ENCODE measurements at regions of chr14 and their contacts with region 1.

Region 1: DNA sequence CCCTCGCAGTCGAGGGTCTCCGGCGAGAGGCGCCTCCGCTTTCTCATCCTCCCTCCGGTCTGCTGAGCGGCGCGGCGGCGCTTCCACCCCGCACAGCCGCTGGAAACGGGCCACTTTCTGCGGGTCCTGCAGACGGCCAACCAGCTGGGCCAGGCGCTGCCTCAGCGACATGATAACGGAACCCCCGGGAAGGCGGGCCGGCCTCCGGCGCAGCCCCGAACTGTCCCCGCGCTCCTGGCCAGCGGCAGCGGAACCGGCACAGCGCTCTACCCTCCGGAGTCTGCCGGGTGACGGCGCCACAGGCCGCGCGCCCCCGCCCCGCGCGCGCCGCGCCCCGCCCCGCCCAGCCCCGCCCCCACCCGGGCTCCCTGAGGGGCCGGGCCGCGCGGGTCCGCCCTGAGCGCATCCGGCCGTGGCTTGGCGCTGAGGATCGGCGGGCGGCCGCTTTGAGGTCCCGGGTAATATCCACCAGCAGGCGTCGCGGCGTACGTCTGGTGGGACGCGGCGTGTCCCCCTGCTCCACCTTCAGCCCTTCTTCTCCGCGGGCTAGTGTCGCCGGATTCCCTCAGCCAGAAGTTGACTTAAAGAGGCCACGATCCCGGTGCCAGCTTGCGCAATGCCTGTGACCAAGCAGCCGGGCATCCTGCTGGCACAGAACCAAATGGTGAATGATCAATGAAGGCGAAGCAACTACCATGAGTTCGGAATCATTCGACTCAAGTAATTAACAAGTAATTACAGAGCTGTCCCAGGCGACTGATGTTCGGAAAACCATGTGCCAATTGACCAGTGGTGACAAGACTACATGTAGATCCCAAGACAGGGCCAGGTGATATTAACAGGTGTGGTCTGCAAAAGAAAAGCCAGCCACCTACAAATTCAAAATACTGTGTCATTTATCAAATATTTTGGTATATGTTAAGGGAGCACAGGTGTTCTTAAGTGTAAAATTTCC is at the start of gene SGPP1:
- DNase-seq: peak; percentile 77 to 84
- ATAC-seq: peak; percentile 93 to 97 (median 95)
- H3K4me3 ChIP-seq: peak within 1 kb of the TSS; percentile 57 to 100 (median 94)
- H3K27ac ChIP-seq: peak within 1 kb of the TSS; percentile 73 to 96 (median 91)
- H3K4me1 ChIP-seq: peaks cover 0 to 28% (median 21%) of the 10 kb centered on the region in 9 donors
- H3K27me3 ChIP-seq: no peaks in the 10 kb centered on the region
- CTCF ChIP-seq: peak; percentile 11 to 67 (median 48)
- total RNA-seq, gene SGPP1: 4.0 to 9.0 (median 4.7) TPM

Region 2: GRCh38 chr14:63594455-63595372 is 133.3 kb before region 1 on chr14:
- intact Hi-C with region 1: no loop called
- DNase-seq: no peak
- ATAC-seq: no peak
- H3K4me3 ChIP-seq: no peak overlapping the region
- H3K27ac ChIP-seq: no peak overlapping the region
- H3K4me1 ChIP-seq: no peaks in the 10 kb centered on the region
- H3K27me3 ChIP-seq: no peaks in the 10 kb centered on the region
- CTCF ChIP-seq: no peak

Region 3: GRCh38 chr14:63641473-63642228 is 86.4 kb before region 1 on chr14 and contains the start of gene WDR89:
- intact Hi-C with region 1: loop called in 3 of 10 experiments (anchors 5 to 10 kb)
- DNase-seq: peak; percentile 93 to 97
- ATAC-seq: peak; percentile 97 to 99 (median 98)
- H3K4me3 ChIP-seq: peak within 1 kb of the TSS; percentile 51 to 80 (median 68)
- H3K27ac ChIP-seq: peak within 1 kb of the TSS; percentile 62 to 96 (median 90)
- H3K4me1 ChIP-seq: peaks cover 0 to 25% (median 12%) of the 10 kb centered on the region in 9 donors
- H3K27me3 ChIP-seq: no peaks in the 10 kb centered on the region
- CTCF ChIP-seq: peak; percentile 49 to 76 (median 72)
- total RNA-seq, gene WDR89: 5.5 to 6.9 (median 6.1) TPM

Region 4: DNA sequence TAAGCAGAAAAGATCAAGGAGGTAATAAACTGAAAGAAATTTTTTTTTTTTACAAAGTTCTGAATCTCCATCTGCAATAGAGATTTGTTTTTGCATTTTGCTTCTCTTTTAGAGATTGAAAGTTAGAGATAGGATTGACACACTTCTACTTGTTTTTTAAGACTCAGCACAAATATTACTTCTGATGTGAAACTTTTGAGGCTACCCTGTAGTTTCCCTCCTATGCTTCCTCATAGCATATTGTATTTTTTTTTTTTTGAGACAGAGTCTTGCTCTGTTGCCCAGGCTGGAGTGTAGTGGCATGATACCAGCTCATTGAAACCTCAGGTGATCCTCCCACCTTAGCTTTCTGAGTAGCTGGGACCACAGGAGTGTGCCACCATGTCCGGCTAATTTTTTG is 32.0 kb after region 1 on chr14:
- intact Hi-C with region 1: loop called in 1 of 10 experiments (anchors 5 kb)
- DNase-seq: no peak
- ATAC-seq: peak in 2 of 8 donors; percentile 29 to 44
- H3K4me3 ChIP-seq: peak overlapping the region in 1 of 10 donors; percentile 31
- H3K27ac ChIP-seq: peak overlapping the region in 4 of 10 donors; percentile 16 to 84 (median 36)
- H3K4me1 ChIP-seq: peaks cover 0 to 21% (median 0%) of the 10 kb centered on the region in 9 donors
- H3K27me3 ChIP-seq: no peaks in the 10 kb centered on the region
- CTCF ChIP-seq: no peak

Measured in heart right ventricle (tissue), 16 donors.